ENCODE measurements at regions of chr2 and their contacts with region 1.

Region 1: GRCh38 chr2:203669820-203670219 is 36.6 kb upstream of the CD28 start:
- DNase-seq: no peak
- H3K4me3 ChIP-seq: no peak overlapping the region
- H3K4me3 Mint-ChIP-seq: peak overlapping the region; percentile 2
- H3K27ac Mint-ChIP-seq: peak overlapping the region; percentile 65
- H3K4me1 ChIP-seq: peaks cover 19% of the 10 kb centered on the region
- H3K4me1 Mint-ChIP-seq: peaks cover 18% of the 10 kb centered on the region
- H3K27me3 ChIP-seq: no peaks in the 10 kb centered on the region
- H3K27me3 Mint-ChIP-seq: no peaks in the 10 kb centered on the region
- CTCF ChIP-seq: no peak

Region 2: DNA sequence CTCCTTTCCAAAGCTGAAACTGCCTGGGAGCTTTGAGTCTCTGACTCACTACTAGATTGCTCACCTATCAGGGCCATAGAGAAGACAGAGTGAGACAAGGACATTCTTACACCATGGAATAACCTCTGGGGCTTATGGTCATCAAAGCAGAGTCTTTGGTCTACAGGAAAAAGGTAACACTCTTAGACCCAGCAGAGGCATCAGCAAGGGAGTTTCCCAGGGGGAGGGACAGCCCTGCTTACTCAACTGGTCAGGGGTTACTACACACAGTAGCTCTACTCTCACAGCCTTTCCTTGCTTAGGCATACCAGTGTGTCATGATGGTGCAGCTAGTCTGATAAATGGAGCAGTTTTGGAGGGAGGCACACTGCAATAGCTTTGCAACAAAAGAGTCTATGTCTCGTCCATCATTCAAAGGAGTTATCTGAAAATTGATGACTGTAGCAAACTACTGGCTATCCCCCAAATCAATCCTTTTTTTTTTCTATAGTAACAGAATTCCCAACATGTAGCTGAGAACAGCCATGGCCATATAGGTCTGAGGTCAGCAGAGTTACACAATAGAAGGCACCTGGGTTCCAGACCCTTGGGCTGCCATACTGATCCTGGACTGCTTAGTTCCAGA is 14.2 kb after region 1 on chr2:
- CTCF ChIA-PET with region 1: no interaction called
- POLR2A ChIA-PET with region 1: no interaction called
- intact Hi-C with region 1: loop called (anchors 2 kb)
- DNase-seq: peak; percentile 65 to 72
- H3K4me3 ChIP-seq: no peak overlapping the region
- H3K4me3 Mint-ChIP-seq: peak overlapping the region; percentile 45
- H3K27ac Mint-ChIP-seq: peak overlapping the region; percentile 99
- H3K4me1 ChIP-seq: peaks cover 54% of the 10 kb centered on the region
- H3K4me1 Mint-ChIP-seq: peaks cover 51% of the 10 kb centered on the region
- H3K27me3 ChIP-seq: no peaks in the 10 kb centered on the region
- H3K27me3 Mint-ChIP-seq: no peaks in the 10 kb centered on the region
- CTCF ChIP-seq: no peak

Measured in Caco-2 (cell line).